ENCODE measurements at regions of chr22 and their contacts with region 1.

Region 1: GRCh38 chr22:39532215-39533071 is at the start of gene RPS19BP1:
- DNase-seq: peak; percentile 99 to 100
- ATAC-seq: peak; percentile 93 to 97
- H3K4me3 ChIP-seq: peak within 1 kb of the TSS; percentile 81 to 98 (median 86)
- H3K27ac ChIP-seq: peak within 1 kb of the TSS; percentile 92 to 98 (median 94)
- H3K4me1 ChIP-seq: peaks cover 45 to 48% of the 10 kb centered on the region in 2 donors
- H3K27me3 ChIP-seq: no peaks in the 10 kb centered on the region
- CTCF ChIP-seq: peak in 1 of 5 experiments; percentile 15
- POLR2A ChIP-seq: peak; percentile 87 to 94
- total RNA-seq, gene RPS19BP1: 72.2 to 128 (median 104) TPM

Region 2: GRCh38 chr22:39236321-39237317 is 295.8 kb before region 1 on chr22:
- in situ Hi-C with region 1: no loop called
- intact Hi-C with region 1: loop called (anchors 2 kb)
- DNase-seq: peak; percentile 89 to 95
- ATAC-seq: peak; percentile 57 to 67
- H3K4me3 ChIP-seq: peak overlapping the region in 2 of 4 donors; percentile 0 to 3
- H3K27ac ChIP-seq: peak overlapping the region; percentile 91 to 97 (median 92)
- H3K4me1 ChIP-seq: peaks cover 77 to 90% of the 10 kb centered on the region in 2 donors
- H3K27me3 ChIP-seq: no peaks in the 10 kb centered on the region
- CTCF ChIP-seq: no peak
- POLR2A ChIP-seq: no peak

Region 3: GRCh38 chr22:39395936-39396796 is 136.3 kb before region 1 on chr22:
- in situ Hi-C with region 1: loop called in 1 of 4 experiments (anchors 10 kb)
- intact Hi-C with region 1: loop called (anchors 2 kb)
- DNase-seq: no peak
- ATAC-seq: no peak
- H3K4me3 ChIP-seq: no peak overlapping the region
- H3K27ac ChIP-seq: no peak overlapping the region
- H3K4me1 ChIP-seq: peaks cover 10% of the 10 kb centered on the region in 2 donors
- H3K27me3 ChIP-seq: no peaks in the 10 kb centered on the region
- CTCF ChIP-seq: no peak
- POLR2A ChIP-seq: no peak

Region 4: DNA sequence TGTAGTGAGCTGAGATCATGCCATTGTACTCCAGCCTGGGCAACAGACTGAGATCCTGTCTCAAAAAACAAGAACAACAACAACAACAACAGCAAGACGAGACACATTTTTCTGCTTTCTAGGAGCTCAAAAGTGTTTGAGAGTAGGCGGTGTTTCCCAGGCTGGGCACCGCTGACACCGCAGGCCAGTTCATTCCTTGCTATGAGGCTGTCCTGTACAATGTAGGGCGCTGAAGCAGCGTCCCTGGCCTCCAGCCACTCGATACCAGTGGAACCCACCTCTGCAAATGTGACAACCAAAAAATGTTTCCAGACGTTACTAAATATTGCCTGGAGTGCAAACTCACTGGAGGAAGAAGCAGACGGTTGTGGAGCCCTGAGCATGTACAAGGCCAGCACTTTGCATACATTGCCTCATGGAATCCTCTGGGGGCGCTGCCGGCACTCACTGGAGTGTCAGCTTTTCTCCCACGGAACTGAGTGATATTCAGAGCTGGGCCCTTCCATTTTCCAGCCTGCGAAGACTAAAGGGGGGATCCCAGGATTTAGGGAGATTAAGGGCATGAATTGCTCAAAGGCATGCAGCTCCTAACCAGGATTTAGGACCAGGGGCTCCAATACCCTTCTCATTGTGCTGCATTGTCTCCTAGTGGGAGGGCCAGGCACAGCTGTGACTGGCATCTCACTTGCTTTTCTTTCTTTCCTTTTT is 36.2 kb before region 1 on chr22:
- in situ Hi-C with region 1: no loop called
- intact Hi-C with region 1: loop called (anchors 1 kb)
- DNase-seq: peak in 1 of 2 donors; percentile 65
- ATAC-seq: peak in 1 of 2 donors; percentile 79
- H3K4me3 ChIP-seq: no peak overlapping the region
- H3K27ac ChIP-seq: peak overlapping the region in 2 of 4 donors; percentile 41 to 48
- H3K4me1 ChIP-seq: peaks cover 3 to 27% of the 10 kb centered on the region in 2 donors
- H3K27me3 ChIP-seq: no peaks in the 10 kb centered on the region
- CTCF ChIP-seq: peak; percentile 41 to 77 (median 59)
- POLR2A ChIP-seq: no peak

Region 5: GRCh38 chr22:40024201-40025061 is 492.0 kb after region 1 on chr22:
- in situ Hi-C with region 1: loop called in 3 of 4 experiments (anchors 5 to 25 kb)
- intact Hi-C with region 1: loop called (anchors 1 kb)
- DNase-seq: peak; percentile 34 to 38
- ATAC-seq: peak in 1 of 2 donors; percentile 62
- H3K4me3 ChIP-seq: no peak overlapping the region
- H3K27ac ChIP-seq: no peak overlapping the region
- H3K4me1 ChIP-seq: no peaks in the 10 kb centered on the region
- H3K27me3 ChIP-seq: no peaks in the 10 kb centered on the region
- CTCF ChIP-seq: peak; percentile 61 to 85 (median 73)
- POLR2A ChIP-seq: no peak

Region 6: DNA sequence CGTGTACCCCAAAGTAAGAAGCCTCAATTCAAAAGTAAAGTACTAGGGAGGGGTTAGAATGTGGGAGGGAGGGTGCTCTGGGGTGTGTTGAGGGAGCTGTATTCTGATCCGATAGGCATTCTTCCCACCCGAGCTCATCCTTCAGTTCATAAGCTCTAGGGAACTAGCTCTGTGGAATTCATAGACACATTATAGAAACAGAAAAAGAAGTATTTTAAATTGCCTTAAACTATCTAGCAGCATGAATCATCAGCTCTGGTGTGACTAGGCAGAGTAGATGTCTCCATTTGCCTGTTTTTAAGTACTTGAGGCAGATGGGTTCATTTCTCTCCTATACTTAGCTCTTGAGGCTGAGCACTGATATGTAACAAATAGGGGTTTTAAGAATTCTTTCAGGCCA is 830.6 kb after region 1 on chr22:
- in situ Hi-C with region 1: loop called in 1 of 4 experiments (anchors 25 kb)
- intact Hi-C with region 1: no loop called
- DNase-seq: no peak
- ATAC-seq: no peak
- H3K4me3 ChIP-seq: no peak overlapping the region
- H3K27ac ChIP-seq: peak overlapping the region in 2 of 4 donors; percentile 17 to 18
- H3K4me1 ChIP-seq: peaks cover 3 to 11% of the 10 kb centered on the region in 2 donors
- H3K27me3 ChIP-seq: no peaks in the 10 kb centered on the region
- CTCF ChIP-seq: no peak
- POLR2A ChIP-seq: no peak

Measured in gastrocnemius medialis (tissue), 4 donors.